PC-3 (cell line): ENCODE measurements at regions of chr13 and their contacts with region 1.

Region 1: GRCh38 chr13:106513025-106513983 is 22.2 kb downstream of the EFNB2 start:
- DNase-seq: peak; percentile 62
- ATAC-seq: peak; percentile 74
- H3K4me3 ChIP-seq: no peak overlapping the region
- H3K27ac ChIP-seq: no peak overlapping the region; the same call in 1 of the 2 replicates
- H3K4me1 ChIP-seq: peaks cover 22% of the 10 kb centered on the region
- H3K27me3 ChIP-seq: no peaks in the 10 kb centered on the region
- CTCF ChIP-seq: no peak

Region 2: GRCh38 chr13:106349080-106349931 is 164.0 kb before region 1 on chr13:
- CTCF ChIA-PET with region 1: no interaction called
- POLR2A ChIA-PET with region 1: no interaction called
- intact Hi-C with region 1: loop called (anchors 10 kb)
- DNase-seq: peak; percentile 83
- ATAC-seq: peak; percentile 90
- H3K4me3 ChIP-seq: peak overlapping the region; percentile 65
- H3K27ac ChIP-seq: peak overlapping the region; percentile 72
- H3K4me1 ChIP-seq: peaks cover 28% of the 10 kb centered on the region
- H3K27me3 ChIP-seq: no peaks in the 10 kb centered on the region
- CTCF ChIP-seq: no peak

Region 3: GRCh38 chr13:106814463-106814862 is 301.2 kb after region 1 on chr13:
- CTCF ChIA-PET with region 1: no interaction called
- POLR2A ChIA-PET with region 1: no interaction called
- intact Hi-C with region 1: no loop called
- DNase-seq: no peak
- ATAC-seq: no peak
- H3K4me3 ChIP-seq: no peak overlapping the region
- H3K27ac ChIP-seq: no peak overlapping the region
- H3K4me1 ChIP-seq: no peaks in the 10 kb centered on the region
- H3K27me3 ChIP-seq: peaks cover 24% of the 10 kb centered on the region; the same call in 1 of the 2 replicates
- CTCF ChIP-seq: no peak